Activated CD8-positive, alpha-beta memory T cell treated with anti-CD3 and anti-CD28 coated beads, Interleukin-2, amount 10 ng/mL, durations not matched to agents 7 days and 5 days (primary cell): ENCODE measurements at regions of chr3 and their contacts with region 1.

Region 1: DNA sequence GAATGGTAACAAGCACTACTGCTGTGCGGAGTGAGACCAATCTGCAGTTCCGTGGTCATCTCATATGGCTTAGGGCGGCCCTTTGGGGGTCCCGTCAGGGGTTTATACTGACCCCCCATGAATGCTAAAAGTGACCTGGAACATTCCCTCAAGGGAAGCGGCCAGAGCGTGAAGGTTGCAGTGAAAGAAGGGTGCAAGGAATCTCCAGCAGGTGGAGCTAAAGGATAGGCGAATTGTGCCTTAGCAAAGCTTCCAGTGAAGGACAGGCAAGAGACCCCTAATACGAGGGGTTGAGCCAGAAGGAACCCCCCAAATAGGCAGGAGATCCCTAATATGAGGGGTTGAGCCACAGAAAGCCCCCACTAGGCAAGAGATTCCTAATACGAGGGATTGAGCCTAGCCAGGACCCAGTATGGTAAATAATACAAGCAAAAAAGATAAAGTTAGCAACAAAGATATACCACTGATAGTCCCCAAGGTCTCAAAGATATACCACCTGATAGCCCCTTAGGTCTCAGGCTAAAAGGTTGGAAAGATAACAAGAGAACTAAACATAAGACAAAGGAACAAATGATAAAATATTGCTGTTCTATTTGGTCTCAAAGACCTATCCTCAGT is 32.8 kb downstream of the ZNF589 start:
- DNase-seq: peak; percentile 68
- ATAC-seq: peak; percentile 61
- H3K4me3 Mint-ChIP-seq: no peak overlapping the region
- H3K27ac Mint-ChIP-seq: no peak overlapping the region
- H3K4me1 Mint-ChIP-seq: peaks cover 17% of the 10 kb centered on the region
- H3K27me3 Mint-ChIP-seq: no peaks in the 10 kb centered on the region

Region 2: GRCh38 chr3:48432411-48433372 is 159.0 kb after region 1 on chr3:
- CTCF ChIA-PET with region 1: interaction called, 61 read pairs
- DNase-seq: no peak
- ATAC-seq: no peak
- H3K4me3 Mint-ChIP-seq: no peak overlapping the region
- H3K27ac Mint-ChIP-seq: no peak overlapping the region
- H3K4me1 Mint-ChIP-seq: peaks cover 18% of the 10 kb centered on the region
- H3K27me3 Mint-ChIP-seq: peaks cover 11% of the 10 kb centered on the region